HCT116 (cell line): ENCODE measurements at regions of chr7 and their contacts with region 1.

Region 1: DNA sequence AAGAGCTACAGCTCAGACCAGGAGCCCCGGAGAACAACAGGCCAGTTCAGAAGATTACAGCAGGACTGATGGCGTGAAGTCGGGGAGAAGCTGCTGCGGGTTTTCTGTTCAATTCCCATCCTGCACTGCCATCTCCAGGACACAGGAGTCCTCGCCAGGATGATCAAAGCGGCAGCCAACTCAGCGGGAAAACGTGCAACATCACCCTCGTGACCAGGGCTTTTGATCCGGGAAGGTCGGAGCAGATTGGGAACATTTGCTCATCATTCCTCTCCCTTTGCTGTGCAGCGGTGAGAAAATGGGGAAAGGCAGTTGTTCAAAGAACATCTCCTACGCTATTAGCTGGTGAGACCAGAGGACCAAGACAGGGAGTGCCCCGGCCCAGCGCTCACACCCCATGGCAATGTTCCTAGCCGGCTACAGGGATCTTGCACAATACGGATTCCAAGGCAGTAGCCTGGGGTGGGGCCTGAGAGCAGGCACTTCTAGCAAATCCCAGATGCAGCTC is 50.4 kb upstream of the FOXK1 start:
- DNase-seq: peak; percentile 85
- ATAC-seq: peak; percentile 80
- H3K4me3 ChIP-seq: peak overlapping the region; percentile 30 to 35
- H3K27ac ChIP-seq: peak overlapping the region; percentile 45
- H3K4me1 ChIP-seq: peaks cover 28 to 41% of the 10 kb centered on the region in 2 experiments
- H3K27me3 ChIP-seq: no peaks in the 10 kb centered on the region
- CTCF ChIP-seq: peak; percentile 70 to 79 (median 73); a peak in 5 of 6 replicates
- POLR2A ChIP-seq: no peak
- RAD21 ChIP-seq: peak; percentile 88

Region 2: DNA sequence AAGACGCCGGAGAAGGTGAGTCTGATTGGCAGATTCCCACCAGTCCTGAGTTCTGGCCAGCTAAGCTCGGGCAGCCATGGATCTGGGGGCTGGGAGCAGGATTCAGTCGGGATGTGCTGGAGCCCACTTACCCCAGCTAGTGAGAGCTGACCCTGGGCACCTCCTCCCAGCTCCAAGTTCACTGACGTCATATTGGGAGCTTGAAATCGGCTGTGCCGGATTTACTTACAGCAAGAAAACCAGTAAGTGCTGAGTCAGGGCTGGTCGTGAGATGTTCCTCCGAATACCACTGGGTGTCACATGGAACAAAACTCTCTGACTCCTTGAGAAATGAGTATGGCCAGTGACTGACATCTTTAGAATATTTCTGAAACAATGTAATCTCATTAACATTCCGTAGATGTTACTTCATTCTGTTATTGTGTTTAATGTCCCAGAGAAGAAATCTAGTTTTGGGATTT is 709.5 kb before region 1 on chr7:
- CTCF ChIA-PET with region 1: no interaction called
- POLR2A ChIA-PET with region 1: no interaction called
- RAD21 ChIA-PET with region 1: no interaction called
- intact Hi-C with region 1: loop called (anchors 5 kb)
- DNase-seq: peak; percentile 72
- ATAC-seq: peak; percentile 96
- H3K4me3 ChIP-seq: no peak overlapping the region
- H3K27ac ChIP-seq: no peak overlapping the region
- H3K4me1 ChIP-seq: peaks cover 0 to 5% of the 10 kb centered on the region in 2 experiments; a peak in 3 of 4 replicates
- H3K27me3 ChIP-seq: 0 out of 2 replicates have a peak, but pooled peaks cover 6% of the 10 kb centered on the region
- CTCF ChIP-seq: peak; percentile 4 to 41 (median 18); a peak in 2 of 6 replicates
- POLR2A ChIP-seq: no peak
- RAD21 ChIP-seq: peak; percentile 49

Region 3: GRCh38 chr7:4561795-4562194 is 69.9 kb before region 1 on chr7:
- CTCF ChIA-PET with region 1: interaction called, 10 read pairs
- POLR2A ChIA-PET with region 1: no interaction called
- RAD21 ChIA-PET with region 1: interaction called in 1 of 2 experiments, 3 read pairs
- intact Hi-C with region 1: no loop called
- DNase-seq: peak; percentile 4
- ATAC-seq: peak; percentile 89
- H3K4me3 ChIP-seq: no peak overlapping the region
- H3K27ac ChIP-seq: no peak overlapping the region
- H3K4me1 ChIP-seq: no peaks in the 10 kb centered on the region
- H3K27me3 ChIP-seq: peaks cover 4% of the 10 kb centered on the region; the same call in 1 of the 2 replicates
- CTCF ChIP-seq: peak; percentile 30 to 84 (median 46)
- POLR2A ChIP-seq: no peak
- RAD21 ChIP-seq: peak; percentile 37; the same call in 1 of the 2 replicates

Region 4: GRCh38 chr7:4641667-4642467 is 10.1 kb after region 1 on chr7:
- CTCF ChIA-PET with region 1: interaction called, 16 read pairs
- POLR2A ChIA-PET with region 1: interaction called, 6 read pairs
- RAD21 ChIA-PET with region 1: no interaction called
- intact Hi-C with region 1: no loop called
- DNase-seq: peak; percentile 83
- ATAC-seq: peak; percentile 93
- H3K4me3 ChIP-seq: peak overlapping the region; percentile 63 to 65
- H3K27ac ChIP-seq: peak overlapping the region; percentile 90
- H3K4me1 ChIP-seq: peaks cover 5 to 24% of the 10 kb centered on the region in 2 experiments; a peak in 3 of 4 replicates
- H3K27me3 ChIP-seq: no peaks in the 10 kb centered on the region
- CTCF ChIP-seq: peak in 2 of 3 experiments; percentile 30 to 34; a peak in 3 of 6 replicates
- POLR2A ChIP-seq: peak; percentile 74
- RAD21 ChIP-seq: no peak; the same call in 1 of the 2 replicates